GM13977 (cell line): ENCODE measurements at regions of chr1 and their contacts with region 1.

Region 1: GRCh38 chr1:84753516-84754385 is 63.5 kb upstream of the SSX2IP start:
- DNase-seq: peak; percentile 78
- CTCF ChIP-seq: peak; percentile 95

Region 2: GRCh38 chr1:83905315-83905907 is 848.3 kb before region 1 on chr1:
- in situ Hi-C with region 1: loop called (anchors 25 kb)
- DNase-seq: peak; percentile 3
- CTCF ChIP-seq: peak; percentile 49

Region 3: DNA sequence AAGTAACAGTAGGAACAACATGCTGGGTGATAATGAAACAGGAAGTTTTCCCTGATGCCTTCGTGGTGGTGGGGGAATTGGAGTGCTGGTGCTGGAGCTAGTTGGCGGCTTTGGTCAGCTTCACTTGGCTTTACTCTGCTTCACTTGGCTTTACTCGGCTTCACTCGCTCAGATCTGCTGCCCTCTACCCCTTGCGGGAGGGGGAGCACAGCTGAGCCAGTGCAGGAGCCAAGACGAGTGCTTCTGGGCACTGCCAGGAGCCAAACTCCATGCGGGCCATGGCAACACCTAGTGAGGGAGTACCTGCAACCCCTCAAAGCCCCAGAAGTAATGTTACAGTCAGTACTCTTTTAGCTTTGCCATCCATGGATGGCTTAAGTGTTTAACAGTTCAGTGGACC is 620.3 kb before region 1 on chr1:
- in situ Hi-C with region 1: loop called (anchors 10 kb)
- DNase-seq: no peak
- CTCF ChIP-seq: no peak

Region 4: GRCh38 chr1:84635271-84635828 is 118.4 kb before region 1 on chr1:
- in situ Hi-C with region 1: no loop called
- DNase-seq: no peak
- CTCF ChIP-seq: no peak

Region 5: DNA sequence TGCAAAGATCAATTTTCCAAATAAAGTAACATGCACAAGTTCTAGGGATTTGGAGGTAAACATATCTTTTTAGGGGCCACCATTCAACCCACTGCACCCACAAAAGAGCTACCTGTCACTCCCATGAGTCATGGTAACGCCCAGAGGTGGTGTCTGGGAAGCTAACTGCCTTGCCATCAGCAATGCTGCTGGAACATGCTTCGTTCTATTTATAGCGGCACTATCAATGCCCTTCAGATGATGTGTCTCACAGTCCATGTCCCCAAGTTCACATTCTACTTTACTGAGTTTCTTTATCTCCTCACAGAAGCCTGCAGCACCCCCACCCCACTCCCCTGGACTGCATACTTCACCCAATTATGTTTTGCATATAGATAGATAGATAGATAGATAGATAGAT is 43.9 kb after region 1 on chr1:
- in situ Hi-C with region 1: no loop called
- DNase-seq: no peak
- CTCF ChIP-seq: no peak

Region 6: DNA sequence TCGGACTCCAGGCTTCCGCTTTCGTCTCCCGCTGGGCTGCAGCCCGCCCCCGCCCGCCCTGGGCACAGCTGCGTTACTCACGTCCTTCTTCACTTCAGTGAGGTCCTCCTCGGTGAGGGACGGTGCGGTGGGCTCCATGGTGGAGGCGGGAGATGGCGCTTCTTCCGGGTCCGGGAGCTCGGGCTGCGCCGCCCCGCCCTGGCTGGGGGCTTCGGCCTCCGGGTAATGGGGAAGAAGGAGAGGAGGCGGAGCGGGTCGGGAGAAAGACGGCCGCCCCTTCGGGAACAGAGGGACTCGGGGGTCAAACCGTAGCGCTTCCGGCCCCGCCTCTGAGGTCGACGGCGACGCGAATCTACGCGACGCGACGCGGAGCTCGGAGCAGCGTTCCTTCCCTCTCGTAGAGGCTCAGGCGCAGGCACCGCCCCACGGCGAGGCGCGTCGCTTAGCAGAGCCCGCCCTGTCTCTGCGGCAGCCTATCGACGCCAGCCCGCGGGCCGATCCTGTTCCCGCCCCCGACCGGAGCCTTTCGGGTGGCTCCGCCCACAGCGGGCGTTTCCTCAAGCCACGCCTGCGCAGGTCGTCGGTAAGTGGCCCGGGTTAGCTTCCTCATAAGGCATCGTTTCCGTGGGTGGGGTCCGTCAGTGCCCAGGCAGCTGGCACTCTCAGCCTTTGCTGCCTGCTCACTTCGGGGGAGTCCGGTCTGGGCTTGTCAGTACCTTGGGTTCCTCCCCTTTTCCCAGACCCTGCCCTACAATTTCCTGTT is 522.6 kb after region 1 on chr1 and contains the start of gene BCL10:
- in situ Hi-C with region 1: no loop called
- DNase-seq: peak; percentile 96
- CTCF ChIP-seq: no peak